Activated naive CD4-positive, alpha-beta T cell treated with anti-CD3 and anti-CD28 coated beads for 36 hours (primary cell): ENCODE measurements at regions of chr2 and their contacts with region 1.

Region 1: DNA sequence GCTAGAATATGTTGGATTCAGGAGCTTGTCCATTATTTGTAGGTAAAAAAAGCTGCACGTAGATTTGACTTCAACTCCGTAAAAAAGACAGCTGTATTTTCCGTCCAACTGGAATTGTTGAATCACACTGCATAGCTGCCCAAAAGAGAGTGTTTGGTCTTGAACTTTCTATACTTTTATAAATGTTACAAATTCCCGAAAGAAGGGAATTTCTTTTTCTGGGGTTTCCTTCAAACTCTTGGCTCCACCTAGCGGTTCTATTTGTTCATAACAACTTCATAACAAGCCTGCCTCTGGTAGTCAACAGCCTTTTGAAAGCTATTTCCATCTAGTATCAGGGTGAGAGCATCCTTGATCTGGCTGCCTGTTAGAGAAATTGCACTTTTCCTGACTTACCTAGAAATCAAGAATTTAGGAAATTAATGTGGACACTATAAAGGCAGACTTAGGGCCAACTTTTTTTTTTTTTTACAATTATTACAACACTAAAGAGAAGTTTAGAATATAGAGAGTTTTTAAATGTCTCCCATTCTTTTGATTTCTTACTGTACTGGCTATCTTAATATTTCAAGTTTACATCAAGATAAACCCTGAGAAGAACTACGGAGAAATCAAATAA is 48.1 kb downstream of the TMEM185B start:
- DNase-seq: peak; percentile 28
- H3K4me3 Mint-ChIP-seq: no peak overlapping the region
- H3K27ac Mint-ChIP-seq: peak overlapping the region; percentile 60
- H3K4me1 Mint-ChIP-seq: peaks cover 47% of the 10 kb centered on the region
- H3K27me3 Mint-ChIP-seq: no peaks in the 10 kb centered on the region

Region 2: GRCh38 chr2:119517433-119517832 is 657.6 kb before region 1 on chr2:
- CTCF ChIA-PET with region 1: no interaction called
- intact Hi-C with region 1: loop called (anchors 1 kb)
- DNase-seq: peak; percentile 60
- H3K4me3 Mint-ChIP-seq: no peak overlapping the region
- H3K27ac Mint-ChIP-seq: no peak overlapping the region
- H3K4me1 Mint-ChIP-seq: no peaks in the 10 kb centered on the region
- H3K27me3 Mint-ChIP-seq: peaks cover 25% of the 10 kb centered on the region

Region 3: GRCh38 chr2:119702918-119703401 is 472.1 kb before region 1 on chr2:
- CTCF ChIA-PET with region 1: interaction called, 63 read pairs
- intact Hi-C with region 1: loop called (anchors 1 kb)
- DNase-seq: peak; percentile 74
- H3K4me3 Mint-ChIP-seq: no peak overlapping the region
- H3K27ac Mint-ChIP-seq: no peak overlapping the region
- H3K4me1 Mint-ChIP-seq: peaks cover 16% of the 10 kb centered on the region
- H3K27me3 Mint-ChIP-seq: no peaks in the 10 kb centered on the region

Region 4: DNA sequence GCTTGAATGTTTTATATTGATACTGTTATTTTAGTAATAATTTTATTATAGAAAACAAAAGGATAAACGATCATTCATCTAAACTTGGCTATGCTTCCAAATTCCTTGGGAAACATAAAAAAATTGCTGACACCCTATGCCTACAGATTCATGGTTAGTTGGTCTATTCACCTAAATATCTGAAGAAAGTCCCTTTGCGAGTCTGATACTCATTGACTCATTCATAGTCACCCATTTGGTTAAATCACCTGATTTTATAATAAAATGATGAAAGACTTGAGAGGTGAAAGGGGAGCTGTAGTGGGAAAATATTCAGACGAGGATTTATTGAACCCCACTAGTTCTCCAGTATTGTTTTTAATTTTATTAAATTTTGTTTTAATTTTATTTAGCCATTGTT is 303.3 kb before region 1 on chr2:
- CTCF ChIA-PET with region 1: interaction called, 3 read pairs
- intact Hi-C with region 1: loop called (anchors 1 kb)
- DNase-seq: no peak
- H3K4me3 Mint-ChIP-seq: no peak overlapping the region
- H3K27ac Mint-ChIP-seq: no peak overlapping the region
- H3K4me1 Mint-ChIP-seq: peaks cover 36% of the 10 kb centered on the region
- H3K27me3 Mint-ChIP-seq: no peaks in the 10 kb centered on the region

Region 5: DNA sequence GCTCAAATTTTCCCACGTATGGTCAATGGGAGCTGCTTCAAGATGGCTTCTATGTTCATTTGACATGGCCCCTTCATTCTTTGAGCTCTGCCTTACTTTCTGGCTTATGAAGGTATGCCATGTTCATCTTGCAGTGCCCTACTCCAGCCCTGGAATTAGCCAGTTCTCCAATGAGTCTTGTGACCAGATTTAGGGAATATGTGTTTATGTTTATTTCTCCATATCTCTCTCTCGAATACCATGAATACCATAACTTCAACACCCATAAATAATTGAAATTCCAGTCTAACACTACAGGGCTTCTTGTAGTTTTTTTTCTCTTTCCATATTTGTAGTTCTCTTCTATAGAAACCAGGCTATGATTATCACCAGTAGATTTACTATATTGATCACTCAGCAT is 122.5 kb before region 1 on chr2:
- CTCF ChIA-PET with region 1: no interaction called
- intact Hi-C with region 1: no loop called
- DNase-seq: no peak
- H3K4me3 Mint-ChIP-seq: no peak overlapping the region
- H3K27ac Mint-ChIP-seq: no peak overlapping the region
- H3K4me1 Mint-ChIP-seq: no peaks in the 10 kb centered on the region
- H3K27me3 Mint-ChIP-seq: no peaks in the 10 kb centered on the region

Region 6: GRCh38 chr2:120223034-120223912 is 48.2 kb after region 1 on chr2 and contains the start of gene TMEM185B:
- CTCF ChIA-PET with region 1: interaction called, 14 read pairs
- intact Hi-C with region 1: loop called (anchors 1 kb)
- DNase-seq: peak; percentile 93
- H3K4me3 Mint-ChIP-seq: peak within 1 kb of the TSS; percentile 80
- H3K27ac Mint-ChIP-seq: peak within 1 kb of the TSS; percentile 87
- H3K4me1 Mint-ChIP-seq: peaks cover 43% of the 10 kb centered on the region
- H3K27me3 Mint-ChIP-seq: no peaks in the 10 kb centered on the region
- total RNA-seq, gene TMEM185B: 11.4 to 12.2 TPM

Region 7: GRCh38 chr2:120312861-120313694 is 138.0 kb after region 1 on chr2:
- CTCF ChIA-PET with region 1: interaction called, 68 read pairs
- intact Hi-C with region 1: loop called (anchors 1 kb)
- DNase-seq: peak; percentile 92
- H3K4me3 Mint-ChIP-seq: peak overlapping the region; percentile 65
- H3K27ac Mint-ChIP-seq: no peak overlapping the region
- H3K4me1 Mint-ChIP-seq: peaks cover 32% of the 10 kb centered on the region
- H3K27me3 Mint-ChIP-seq: no peaks in the 10 kb centered on the region

Region 8: DNA sequence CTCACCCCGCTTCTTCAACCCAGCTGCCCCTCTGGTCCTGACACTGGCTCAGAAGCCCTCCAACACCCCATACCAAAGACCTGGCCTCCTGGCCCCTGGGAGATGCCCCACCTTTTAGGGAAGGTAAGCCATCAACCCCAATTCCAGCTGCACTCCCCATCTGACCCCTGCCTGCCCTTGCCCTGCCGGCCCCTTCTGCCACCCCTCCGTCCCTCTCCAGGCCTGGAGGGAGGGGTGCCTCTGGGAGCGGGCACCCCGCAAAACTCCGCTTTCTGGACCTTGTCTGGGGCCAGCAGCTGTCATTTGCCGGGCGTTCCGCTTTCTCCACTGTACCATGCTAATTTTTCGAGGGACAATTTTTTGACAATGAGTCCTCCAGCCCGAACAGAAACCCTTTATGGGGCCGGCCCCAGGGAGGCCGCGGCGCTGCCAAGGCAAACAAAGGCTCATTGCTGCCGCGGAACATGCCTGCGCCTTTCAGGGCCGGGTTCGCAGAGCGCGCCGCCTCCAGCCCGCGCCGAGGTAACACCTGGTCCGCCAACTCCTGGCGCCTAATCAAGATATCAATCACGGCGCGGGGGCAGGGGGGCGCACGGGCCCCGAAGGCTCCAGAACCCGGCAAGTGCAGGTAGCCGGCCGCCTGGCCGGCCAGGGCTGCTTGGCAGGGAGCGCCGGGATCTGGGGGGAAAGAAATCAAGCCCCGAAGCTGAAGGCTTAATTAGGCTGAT is 266.8 kb after region 1 on chr2:
- CTCF ChIA-PET with region 1: no interaction called
- intact Hi-C with region 1: no loop called
- DNase-seq: peak; percentile 9
- H3K4me3 Mint-ChIP-seq: peak overlapping the region; percentile 69
- H3K27ac Mint-ChIP-seq: no peak overlapping the region
- H3K4me1 Mint-ChIP-seq: peaks cover 12% of the 10 kb centered on the region
- H3K27me3 Mint-ChIP-seq: peaks cover 27% of the 10 kb centered on the region

Region 9: GRCh38 chr2:120470041-120470965 is 295.2 kb after region 1 on chr2:
- CTCF ChIA-PET with region 1: no interaction called
- intact Hi-C with region 1: no loop called
- DNase-seq: no peak
- H3K4me3 Mint-ChIP-seq: no peak overlapping the region
- H3K27ac Mint-ChIP-seq: no peak overlapping the region
- H3K4me1 Mint-ChIP-seq: no peaks in the 10 kb centered on the region
- H3K27me3 Mint-ChIP-seq: no peaks in the 10 kb centered on the region